A673 (cell line): ENCODE measurements at regions of chr1 and their contacts with region 1.

Region 1: GRCh38 chr1:156625436-156626078 is 6.3 kb downstream of the HAPLN2 start:
- DNase-seq: peak; percentile 64
- H3K4me3 ChIP-seq: peak overlapping the region; percentile 36
- H3K27ac ChIP-seq: no peak overlapping the region
- H3K4me1 ChIP-seq: peaks cover 16% of the 10 kb centered on the region
- H3K27me3 ChIP-seq: peaks cover 58% of the 10 kb centered on the region
- CTCF ChIP-seq: peak; percentile 90

Region 2: DNA sequence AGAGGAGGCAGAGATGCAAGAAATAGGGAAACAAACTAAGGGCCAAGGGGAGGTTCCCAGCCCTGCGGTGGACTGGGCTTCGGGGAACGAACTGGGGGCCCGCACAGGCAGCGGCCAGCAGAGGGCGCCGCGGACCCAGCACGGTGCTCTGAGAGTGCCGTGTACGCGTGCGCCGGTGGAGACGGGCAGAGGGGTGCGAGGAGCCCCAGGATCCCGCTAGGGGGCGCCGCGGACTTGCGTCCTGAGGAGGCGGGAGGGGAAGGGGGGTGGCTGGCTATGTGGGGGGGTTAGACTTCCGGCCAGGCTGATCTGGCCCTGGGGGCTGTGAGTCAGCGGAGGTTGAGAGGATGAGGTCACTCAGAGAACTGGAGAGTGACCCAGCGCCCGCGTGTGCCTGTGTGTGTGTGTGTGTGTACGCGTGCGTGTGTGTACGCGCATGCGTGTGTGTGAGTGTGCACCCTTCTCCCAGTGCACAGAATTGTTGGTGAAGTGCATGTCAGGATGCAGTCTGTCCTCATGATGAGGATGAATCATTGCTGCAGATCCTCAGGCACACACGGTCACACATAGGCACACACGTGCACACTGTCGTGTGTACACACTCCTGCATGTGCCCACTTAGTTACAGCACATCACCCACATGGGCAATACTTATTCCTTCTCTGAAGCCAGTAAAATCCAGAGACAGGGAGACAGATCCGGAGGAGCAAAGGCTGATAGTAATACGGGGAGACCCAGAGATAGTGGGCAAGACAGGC is 34.6 kb after region 1 on chr1:
- CTCF ChIA-PET with region 1: interaction called, 12 read pairs
- POLR2A ChIA-PET with region 1: no interaction called
- intact Hi-C with region 1: loop called (anchors 1 kb)
- DNase-seq: peak; percentile 96
- H3K4me3 ChIP-seq: no peak overlapping the region
- H3K27ac ChIP-seq: no peak overlapping the region
- H3K4me1 ChIP-seq: peaks cover 53% of the 10 kb centered on the region
- H3K27me3 ChIP-seq: peaks cover 22% of the 10 kb centered on the region
- CTCF ChIP-seq: peak; percentile 100

Region 3: DNA sequence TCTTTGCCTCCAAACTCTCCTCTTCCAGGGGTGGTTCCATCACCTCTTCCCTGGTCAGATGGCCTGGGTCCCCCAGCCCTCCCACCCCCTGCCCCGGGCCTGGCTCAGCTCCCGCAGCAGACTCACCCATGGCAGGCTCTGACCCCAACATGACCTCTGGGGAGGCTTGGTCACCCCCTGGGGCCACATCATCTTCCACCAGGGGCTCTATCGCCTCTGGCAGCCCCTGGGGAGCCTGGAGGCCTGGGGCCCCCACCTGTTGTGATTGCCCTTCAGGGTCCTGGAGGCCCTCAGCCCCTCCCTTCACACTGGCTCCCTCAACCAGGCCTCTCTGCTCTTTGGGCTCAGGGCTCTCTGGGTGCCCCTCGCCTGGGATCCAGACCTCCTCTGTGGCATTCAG is 45.2 kb after region 1 on chr1:
- CTCF ChIA-PET with region 1: no interaction called
- POLR2A ChIA-PET with region 1: no interaction called
- intact Hi-C with region 1: no loop called
- DNase-seq: no peak
- H3K4me3 ChIP-seq: no peak overlapping the region
- H3K27ac ChIP-seq: no peak overlapping the region
- H3K4me1 ChIP-seq: no peaks in the 10 kb centered on the region
- H3K27me3 ChIP-seq: peaks cover 13% of the 10 kb centered on the region
- CTCF ChIP-seq: no peak

Region 4: GRCh38 chr1:156852418-156852874 is 226.9 kb after region 1 on chr1:
- CTCF ChIA-PET with region 1: interaction called, 14 read pairs
- POLR2A ChIA-PET with region 1: no interaction called
- intact Hi-C with region 1: no loop called
- DNase-seq: no peak
- H3K4me3 ChIP-seq: no peak overlapping the region
- H3K27ac ChIP-seq: no peak overlapping the region
- H3K4me1 ChIP-seq: no peaks in the 10 kb centered on the region
- H3K27me3 ChIP-seq: no peaks in the 10 kb centered on the region
- CTCF ChIP-seq: no peak